ENCODE measurements at regions of chr17 and their contacts with region 1.

Region 1: GRCh38 chr17:48024937-48025906 is 12.4 kb downstream of the COPZ2 start:
- DNase-seq: peak; percentile 84
- H3K4me3 ChIP-seq: peak overlapping the region; percentile 42
- H3K27me3 ChIP-seq: no peaks in the 10 kb centered on the region
- CTCF ChIP-seq: peak; percentile 90

Region 2: GRCh38 chr17:47172698-47173565 is 852.3 kb before region 1 on chr17:
- CTCF ChIA-PET with region 1: no interaction called
- POLR2A ChIA-PET with region 1: no interaction called
- DNase-seq: no peak
- H3K4me3 ChIP-seq: no peak overlapping the region
- H3K27me3 ChIP-seq: no peaks in the 10 kb centered on the region
- CTCF ChIP-seq: no peak

Region 3: DNA sequence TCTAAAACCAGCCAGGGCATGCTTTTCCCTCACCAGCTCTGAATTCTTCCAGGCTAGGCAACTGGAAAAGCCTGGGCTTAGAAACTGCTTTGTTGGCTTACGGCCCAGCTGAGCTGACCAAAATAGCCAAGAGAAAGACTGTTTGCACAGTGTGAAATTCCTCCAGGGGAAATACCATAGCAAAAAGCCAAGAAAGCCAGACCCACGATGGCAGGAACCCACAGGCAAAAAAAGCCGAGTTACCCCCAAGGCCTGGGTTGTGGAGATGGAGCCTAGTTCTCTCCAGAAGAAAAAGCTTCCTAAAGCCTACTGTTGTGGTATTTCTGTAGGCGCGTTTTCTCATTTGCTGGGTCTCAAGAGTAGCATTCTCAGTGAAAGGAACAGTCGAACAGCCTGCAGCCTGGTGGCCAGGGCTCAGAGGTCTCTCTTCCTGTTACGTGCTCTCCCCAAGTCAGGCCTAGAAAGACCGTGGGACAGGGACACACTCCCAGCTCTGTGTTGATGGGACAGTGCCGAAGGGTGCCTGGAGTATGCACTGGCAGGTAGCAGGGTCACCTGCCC is 119.9 kb before region 1 on chr17:
- CTCF ChIA-PET with region 1: no interaction called
- POLR2A ChIA-PET with region 1: no interaction called
- DNase-seq: peak; percentile 60
- H3K4me3 ChIP-seq: no peak overlapping the region
- H3K27me3 ChIP-seq: no peaks in the 10 kb centered on the region
- CTCF ChIP-seq: no peak

Region 4: DNA sequence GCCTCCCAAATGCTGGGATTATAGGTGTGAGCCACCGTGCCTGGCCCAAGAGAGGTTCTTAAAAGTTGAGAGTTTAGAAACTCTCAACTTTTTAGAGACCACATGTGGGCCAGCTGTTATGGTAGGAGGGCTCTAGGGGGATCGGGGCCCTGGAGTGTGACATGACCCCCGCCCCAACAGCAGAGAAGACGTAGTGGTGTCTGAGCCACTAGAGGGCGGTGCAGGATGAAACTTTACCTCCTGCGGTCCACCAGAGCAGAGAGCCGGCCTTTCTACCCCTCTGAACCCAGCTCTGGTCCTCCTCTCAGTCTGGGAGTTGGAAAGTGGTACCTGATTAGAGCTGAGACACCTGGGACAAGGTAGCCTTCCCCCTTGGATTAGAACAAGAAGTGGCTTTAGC is 46.9 kb before region 1 on chr17:
- CTCF ChIA-PET with region 1: interaction called, 575 read pairs
- POLR2A ChIA-PET with region 1: no interaction called
- DNase-seq: no peak
- H3K4me3 ChIP-seq: no peak overlapping the region
- H3K27me3 ChIP-seq: no peaks in the 10 kb centered on the region
- CTCF ChIP-seq: peak; percentile 81

Region 5: DNA sequence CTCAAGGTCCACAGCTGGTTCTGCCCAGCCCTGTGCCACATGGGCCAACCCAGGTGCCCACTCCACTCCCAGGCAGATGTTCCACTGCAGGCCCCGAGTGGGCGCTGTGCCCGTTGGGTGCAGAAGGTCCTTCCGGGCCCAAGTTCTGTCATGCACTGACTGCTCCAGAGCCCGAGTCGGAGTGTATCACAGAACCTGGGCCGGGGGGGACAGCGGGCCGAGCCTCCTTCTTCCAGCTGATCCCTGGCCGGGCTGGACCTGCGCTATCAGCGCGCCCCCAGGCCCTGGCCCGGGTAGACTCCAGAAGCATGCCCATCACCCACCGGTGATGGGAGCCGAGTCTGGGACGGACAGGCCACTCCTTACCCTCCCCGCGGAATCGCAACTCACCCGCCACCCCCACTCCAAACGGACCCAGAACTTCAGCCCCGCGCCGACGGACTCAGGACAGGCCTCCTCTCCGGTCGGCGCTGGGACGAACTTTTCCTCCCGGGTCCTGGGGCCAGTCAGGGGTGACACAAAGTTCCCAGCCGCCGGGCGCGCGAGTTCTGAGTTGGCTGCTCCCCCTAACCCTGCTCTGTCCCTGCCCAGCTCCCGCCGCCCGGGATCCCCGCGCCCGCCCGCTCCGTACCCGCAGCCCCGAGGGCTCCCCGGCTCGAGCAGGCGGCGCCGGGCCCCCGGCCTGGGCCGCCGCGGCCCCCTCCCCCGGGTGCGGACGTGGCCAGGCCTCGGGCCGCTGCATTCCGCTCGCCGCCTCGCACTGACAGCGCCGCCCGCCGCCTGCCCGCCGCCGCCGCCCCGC is 12.0 kb after region 1 on chr17 and contains the start of gene COPZ2:
- CTCF ChIA-PET with region 1: interaction called, 64 read pairs
- POLR2A ChIA-PET with region 1: interaction called, 4 read pairs
- DNase-seq: no peak
- H3K4me3 ChIP-seq: peak within 1 kb of the TSS; percentile 78
- H3K27me3 ChIP-seq: no peaks in the 10 kb centered on the region
- CTCF ChIP-seq: peak; percentile 79
- polyA plus RNA-seq, gene COPZ2: 132 and 181 TPM in 2 replicates

Region 6: DNA sequence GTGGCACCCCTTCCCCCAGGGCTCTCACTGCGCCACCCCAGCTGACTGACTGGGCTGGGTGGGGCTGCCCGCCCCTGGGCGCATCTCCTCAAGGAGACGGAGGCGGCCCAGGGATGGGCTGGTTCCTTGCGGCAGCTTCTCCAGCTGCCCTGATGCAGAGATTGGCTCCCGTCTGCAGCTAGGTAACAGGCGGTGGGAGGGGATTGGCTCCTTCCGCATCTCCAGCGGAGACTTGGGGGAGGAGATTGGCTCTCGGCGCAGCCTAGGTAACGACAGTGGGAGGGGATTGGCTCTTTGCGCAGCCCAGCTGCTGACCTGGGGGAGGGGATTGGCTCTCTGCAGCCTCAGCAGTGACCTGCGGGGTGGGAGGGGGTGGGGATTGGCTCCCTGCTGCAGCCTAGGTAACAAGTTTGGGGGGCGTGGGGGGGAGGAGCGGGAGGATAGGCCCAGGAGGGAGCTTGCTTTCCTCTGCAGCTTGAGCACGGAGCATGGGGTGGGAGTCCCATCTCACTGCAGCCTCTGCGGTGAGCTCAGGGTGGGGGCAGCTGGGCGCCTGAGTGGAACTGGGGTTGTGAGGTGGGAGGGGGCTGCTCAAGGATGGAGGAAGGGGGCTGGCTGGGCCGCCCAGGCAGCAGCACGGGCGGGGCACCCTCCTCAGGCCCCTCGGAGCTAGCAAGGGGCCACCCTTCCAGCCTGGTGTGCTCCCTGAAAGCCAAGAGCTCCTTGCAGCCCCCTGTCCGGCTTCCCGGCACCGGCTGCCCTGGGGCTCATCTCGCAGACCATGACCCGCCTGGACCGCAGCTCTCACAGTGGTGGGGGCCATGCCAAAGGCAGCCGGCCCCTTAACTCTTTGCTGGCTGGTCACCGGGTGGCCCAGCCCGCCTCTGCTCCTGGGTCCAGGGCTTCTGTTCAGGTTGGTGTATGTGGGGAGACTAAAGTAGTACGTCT is 29.3 kb after region 1 on chr17:
- CTCF ChIA-PET with region 1: interaction called, 44 read pairs
- POLR2A ChIA-PET with region 1: no interaction called
- DNase-seq: peak; percentile 57
- H3K4me3 ChIP-seq: peak overlapping the region; percentile 36
- H3K27me3 ChIP-seq: no peaks in the 10 kb centered on the region
- CTCF ChIP-seq: no peak

Region 7: GRCh38 chr17:48074315-48075081 is 49.3 kb after region 1 on chr17:
- CTCF ChIA-PET with region 1: interaction called, 200 read pairs
- POLR2A ChIA-PET with region 1: interaction called, 3 read pairs
- DNase-seq: no peak
- H3K4me3 ChIP-seq: no peak overlapping the region
- H3K27me3 ChIP-seq: no peaks in the 10 kb centered on the region
- CTCF ChIP-seq: peak; percentile 81

Region 8: DNA sequence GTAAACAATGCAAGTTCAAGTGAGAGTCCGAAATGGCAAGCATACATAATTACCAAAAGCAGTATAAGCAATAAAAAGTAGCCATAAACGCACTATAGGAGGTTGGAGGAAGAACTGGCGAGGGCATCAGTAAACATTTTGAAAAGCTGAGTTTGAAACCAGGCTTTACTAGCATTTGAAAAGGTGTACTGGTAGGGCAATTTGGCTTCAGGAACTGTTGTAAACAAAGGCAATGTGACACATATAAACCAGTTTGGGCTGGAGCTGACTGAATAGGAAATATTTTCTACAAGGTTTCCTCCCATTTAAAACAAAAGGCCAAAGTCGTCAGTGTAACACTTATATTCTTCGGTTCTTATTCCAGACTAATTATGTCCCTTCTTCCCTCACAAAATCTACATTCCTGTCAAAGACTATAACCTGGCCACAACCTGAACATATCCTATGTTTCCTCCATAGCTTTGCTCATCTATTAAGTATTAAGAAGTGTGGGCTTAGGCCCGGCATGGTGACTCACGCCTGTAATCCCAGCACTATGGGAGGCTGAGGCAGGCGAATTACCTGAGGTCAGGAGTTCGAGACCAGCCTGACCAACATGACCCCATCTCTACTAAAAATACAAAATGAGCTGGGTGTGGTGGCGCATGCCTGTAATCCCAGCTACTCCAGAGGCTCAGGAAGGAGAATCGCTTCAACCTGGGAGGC is 68.3 kb after region 1 on chr17:
- CTCF ChIA-PET with region 1: interaction called, 30 read pairs
- POLR2A ChIA-PET with region 1: no interaction called
- DNase-seq: no peak
- H3K4me3 ChIP-seq: no peak overlapping the region
- H3K27me3 ChIP-seq: no peaks in the 10 kb centered on the region
- CTCF ChIP-seq: no peak

Region 9: DNA sequence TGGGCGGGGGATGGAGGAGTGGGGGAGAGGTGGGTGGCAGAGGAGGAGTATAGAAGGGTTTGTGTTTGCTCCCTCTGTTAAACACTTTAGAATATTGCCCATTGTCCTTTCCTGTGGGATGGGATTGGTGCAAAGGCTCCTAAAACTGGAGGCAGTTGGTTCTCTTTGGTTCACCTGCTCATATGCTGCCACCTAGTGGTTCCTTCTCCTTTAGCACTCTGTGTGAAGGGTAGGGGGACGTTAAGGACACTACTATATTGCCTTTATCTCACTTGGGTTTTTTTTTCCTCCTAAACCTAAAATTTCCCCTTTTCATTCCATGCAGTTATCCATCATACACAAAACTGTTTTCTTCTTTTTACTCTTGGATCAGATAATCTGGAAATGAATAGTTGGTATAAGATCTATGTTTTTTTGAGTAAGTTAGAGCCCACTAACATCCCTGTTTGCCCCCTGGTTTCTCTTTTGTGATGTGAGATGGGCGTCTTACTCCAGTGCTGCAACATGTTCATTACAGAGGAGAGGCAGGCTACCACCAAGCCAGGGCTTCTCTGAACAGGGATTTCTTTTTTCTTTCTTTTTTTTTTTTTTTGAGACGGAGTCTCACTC is 106.1 kb after region 1 on chr17:
- CTCF ChIA-PET with region 1: interaction called, 74 read pairs
- POLR2A ChIA-PET with region 1: no interaction called
- DNase-seq: no peak
- H3K4me3 ChIP-seq: no peak overlapping the region
- H3K27me3 ChIP-seq: peaks cover 4% of the 10 kb centered on the region
- CTCF ChIP-seq: peak; percentile 87

Measured in BJ (cell line).